Posterior cingulate gyrus (tissue), 11 donors: ENCODE measurements at regions of chr15 and their contacts with region 1.

Region 1: GRCh38 chr15:52679232-52680040 is at the start of gene ATOSA:
- DNase-seq: peak; percentile 93 to 99 (median 96)

Region 2: DNA sequence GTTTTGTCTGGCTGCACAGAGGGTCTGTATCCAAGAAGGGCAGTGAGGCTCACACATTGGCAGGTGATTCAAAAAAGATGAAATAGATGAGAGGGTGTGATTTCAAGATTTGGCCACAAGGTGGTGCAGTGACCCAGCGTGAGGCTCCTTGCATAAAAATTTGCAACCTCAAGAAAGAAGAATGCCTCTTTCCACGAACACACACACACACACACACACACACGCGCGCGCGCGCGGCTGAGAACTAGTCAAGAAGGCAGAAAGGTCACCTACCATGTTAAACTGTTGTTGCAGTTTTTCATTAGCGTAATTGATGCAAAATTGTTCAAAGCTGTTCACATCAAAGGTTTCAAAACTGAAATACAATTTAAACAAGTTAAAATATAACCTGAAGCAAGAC is 423.1 kb before region 1 on chr15:
- intact Hi-C with region 1: loop called (anchors 5 kb)
- DNase-seq: peak in 7 of 10 donors; percentile 62 to 94 (median 69)

Region 3: GRCh38 chr15:52528991-52529926 is 150.2 kb before region 1 on chr15:
- intact Hi-C with region 1: loop called (anchors 5 kb)
- DNase-seq: peak; percentile 74 to 97 (median 77)